GM10248 (cell line): ENCODE measurements at regions of chr1 and their contacts with region 1.

Region 1: DNA sequence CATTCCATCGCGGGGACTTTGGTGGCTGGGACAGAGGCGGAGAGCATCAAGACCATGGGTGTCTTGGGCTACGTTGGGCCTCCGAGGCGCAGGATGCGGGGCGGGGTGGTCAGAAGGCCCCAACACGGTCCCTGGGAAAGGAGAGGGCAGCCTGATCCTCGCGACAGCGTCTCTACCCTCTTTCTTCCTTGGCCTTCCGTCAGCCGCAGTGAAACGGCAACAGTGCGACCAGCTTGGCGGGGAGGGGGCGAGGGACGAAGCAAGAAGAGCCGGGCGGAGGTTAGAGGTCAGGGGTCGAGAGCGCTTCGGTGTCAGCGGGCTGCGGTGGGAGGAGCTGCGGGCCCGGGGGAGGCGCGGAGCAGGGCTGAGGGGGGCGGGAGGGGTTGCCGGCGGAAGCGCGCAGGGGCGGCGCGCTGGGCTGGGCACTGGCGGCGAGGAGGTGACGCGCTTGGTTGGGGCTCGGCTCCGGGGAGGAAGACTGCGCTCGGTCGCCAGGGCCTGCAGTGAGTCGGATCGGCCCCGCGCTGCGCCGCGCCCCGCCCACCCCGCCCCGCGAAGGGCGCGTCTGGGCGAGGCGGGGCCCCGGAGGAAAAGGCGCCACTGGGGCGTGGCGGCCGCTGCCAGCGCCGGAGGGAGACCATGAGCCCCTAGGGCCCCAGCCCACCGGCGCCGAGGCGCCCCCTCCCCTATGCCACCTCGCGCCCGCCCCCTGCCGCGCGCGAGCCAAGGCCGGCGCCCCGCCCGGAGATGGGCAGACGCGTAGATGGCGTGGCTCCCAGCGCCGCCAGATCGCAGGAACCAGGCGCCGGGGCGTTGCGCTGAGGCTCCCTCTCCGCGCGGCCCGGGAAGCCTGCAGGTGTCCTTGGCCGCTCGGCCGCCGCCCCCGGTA is at the start of gene KCNC4:
- DNase-seq: peak; percentile 88
- CTCF ChIP-seq: no peak

Region 2: GRCh38 chr1:110188035-110188618 is 21.8 kb before region 1 on chr1:
- CTCF ChIA-PET with region 1: interaction called, 10 read pairs
- POLR2A ChIA-PET with region 1: no interaction called
- DNase-seq: no peak
- CTCF ChIP-seq: no peak

Region 3: DNA sequence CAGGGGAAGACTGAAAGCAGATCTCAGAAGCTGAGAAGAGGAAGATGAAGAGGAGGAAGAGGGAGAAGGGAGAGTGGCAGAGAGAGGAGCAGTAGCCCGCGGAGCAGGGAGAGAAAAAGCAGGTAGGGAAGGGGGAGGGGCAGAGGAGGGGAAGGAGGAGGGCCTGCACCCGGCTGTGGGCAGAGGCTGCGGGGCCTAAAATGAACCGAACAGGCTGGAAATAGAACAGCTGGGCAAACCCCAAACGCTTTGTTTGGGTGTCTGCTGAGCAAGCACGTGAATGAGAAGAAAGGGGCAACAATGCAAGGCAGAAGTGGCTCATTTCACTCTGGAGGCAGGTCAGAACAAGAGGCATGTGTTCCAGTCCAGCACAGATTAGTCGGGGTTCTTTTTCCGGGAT is 33.6 kb after region 1 on chr1:
- CTCF ChIA-PET with region 1: interaction called, 30 read pairs
- POLR2A ChIA-PET with region 1: no interaction called
- DNase-seq: peak; percentile 49
- CTCF ChIP-seq: no peak

Region 4: DNA sequence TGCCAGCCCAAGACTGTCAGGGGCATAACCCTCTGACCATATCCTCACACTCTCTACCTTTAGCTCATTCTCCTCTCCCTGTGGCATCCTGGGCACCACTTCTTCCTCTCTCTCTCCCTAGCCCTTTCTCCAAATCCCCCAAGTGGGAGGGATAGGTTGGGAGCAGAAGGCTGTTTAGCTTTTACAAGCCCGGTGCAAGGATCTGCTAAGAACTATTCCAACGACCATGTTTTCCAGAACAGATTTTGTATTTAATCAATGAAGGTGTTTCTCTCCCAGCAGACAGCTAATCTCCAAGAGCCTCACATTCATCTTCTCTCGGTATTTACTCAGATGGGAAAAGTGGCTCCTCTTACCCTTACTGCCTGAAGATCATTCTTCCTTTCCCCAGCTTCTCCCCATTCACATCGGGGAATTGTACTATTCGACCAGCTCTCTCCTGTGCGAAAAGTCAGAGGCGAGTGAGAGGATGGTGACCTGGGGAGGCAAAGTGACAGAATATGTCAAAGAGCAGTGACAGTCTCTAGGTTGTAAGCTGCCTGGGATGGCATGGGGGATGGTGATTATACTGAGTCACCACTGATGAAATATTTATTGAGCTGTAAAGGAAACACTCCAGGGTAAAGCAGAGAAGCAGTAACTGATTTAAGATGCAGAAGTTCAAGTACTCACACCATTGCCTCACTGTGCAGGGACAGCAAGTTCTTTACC is 82.2 kb after region 1 on chr1:
- CTCF ChIA-PET with region 1: interaction called, 19 read pairs
- POLR2A ChIA-PET with region 1: no interaction called
- DNase-seq: no peak
- CTCF ChIP-seq: no peak

Region 5: DNA sequence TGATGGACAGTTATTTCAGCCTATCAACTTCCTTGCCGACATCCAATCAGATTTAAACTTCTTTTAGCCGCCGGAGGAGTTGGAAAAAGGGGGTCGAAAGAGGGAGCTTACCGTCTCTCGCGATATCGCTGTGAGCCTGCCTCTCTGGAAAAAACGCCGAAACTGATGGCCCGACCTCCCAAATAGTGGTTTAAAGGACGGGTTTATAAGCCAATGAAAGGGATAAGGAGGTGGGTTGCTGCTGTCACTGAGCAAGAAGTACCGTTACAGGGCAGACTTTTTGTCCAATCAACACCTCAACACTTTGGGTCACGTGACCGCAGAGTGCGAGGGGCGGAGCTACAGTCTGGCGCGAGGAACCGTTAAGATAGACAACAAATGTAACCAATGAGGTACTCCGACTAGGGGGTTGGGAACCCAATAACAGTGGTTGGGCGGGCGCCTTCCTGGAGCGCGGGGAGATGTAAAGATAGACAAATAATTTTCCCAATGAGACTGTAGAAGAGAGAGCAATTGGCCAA is 129.0 kb after region 1 on chr1 and contains the start of gene RBM15:
- CTCF ChIA-PET with region 1: interaction called, 58 read pairs
- POLR2A ChIA-PET with region 1: no interaction called
- DNase-seq: peak; percentile 96
- CTCF ChIP-seq: no peak

Region 6: DNA sequence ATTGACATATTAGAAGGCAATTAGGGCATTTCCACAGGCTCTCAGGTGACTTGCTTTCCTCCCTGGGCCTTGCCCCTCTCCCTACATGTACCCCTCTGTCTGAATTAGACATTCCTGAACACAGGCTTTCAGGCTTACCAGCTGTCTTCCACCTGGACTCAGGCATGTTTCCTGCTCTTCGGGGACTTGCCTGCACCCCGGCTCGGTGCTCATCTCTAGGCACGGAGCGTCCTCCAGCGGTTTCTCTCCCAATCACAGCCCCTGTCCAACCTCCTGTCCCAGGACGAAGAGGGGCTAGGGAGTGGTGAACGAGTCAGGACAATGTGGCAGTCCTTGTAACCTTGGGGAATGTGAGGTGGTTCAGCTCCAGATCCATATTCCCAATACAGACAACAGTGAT is 245.2 kb after region 1 on chr1:
- CTCF ChIA-PET with region 1: interaction called, 295 read pairs
- POLR2A ChIA-PET with region 1: no interaction called
- DNase-seq: no peak
- CTCF ChIP-seq: no peak